ENCODE measurements at regions of chr3 and their contacts with region 1.

Region 1: DNA sequence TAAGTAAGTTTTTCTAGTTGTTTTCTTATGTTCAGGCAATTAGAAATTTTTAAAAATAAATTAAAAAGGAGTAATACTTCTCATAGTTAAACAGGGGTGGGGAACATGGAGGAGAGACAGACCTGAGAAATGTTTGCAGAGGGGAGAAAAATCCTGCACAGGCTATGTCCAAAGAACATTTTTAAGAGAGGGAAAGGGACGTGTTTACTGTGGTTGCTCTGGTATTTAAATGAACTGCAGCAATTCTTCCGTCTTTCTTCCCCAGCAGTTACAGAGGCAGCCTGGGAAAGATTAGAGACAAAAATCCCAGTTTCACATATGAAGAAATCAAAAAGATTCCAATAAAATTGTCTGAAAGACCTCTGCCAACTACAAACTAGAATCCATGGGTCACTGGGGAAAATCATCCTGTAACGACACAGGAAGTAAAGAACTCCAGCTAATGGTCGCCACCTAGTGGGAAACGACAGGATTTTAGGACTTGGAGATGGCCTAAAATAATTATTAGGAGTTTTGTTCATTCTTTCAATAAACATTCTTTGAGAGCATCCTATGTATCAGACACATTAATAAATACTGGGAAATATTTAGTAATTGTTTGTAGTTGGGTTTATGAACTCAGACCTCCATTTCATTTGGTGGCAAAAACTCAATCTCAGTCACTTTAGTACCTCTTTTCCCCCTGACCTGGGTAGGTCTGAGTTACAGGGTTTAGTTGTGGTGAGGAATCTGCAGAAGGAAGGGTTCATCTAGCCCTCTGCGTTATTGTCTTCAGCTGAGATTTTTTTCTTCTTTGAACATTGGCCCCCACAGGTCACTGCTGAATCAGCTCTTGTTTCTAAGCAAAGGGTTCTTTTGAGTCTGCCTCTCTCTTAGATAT is 69.9 kb upstream of the GOLIM4 start:
- DNase-seq: no peak

Region 2: GRCh38 chr3:167684388-167684993 is 481.1 kb before region 1 on chr3:
- intact Hi-C with region 1: no loop called
- DNase-seq: no peak

Region 3: DNA sequence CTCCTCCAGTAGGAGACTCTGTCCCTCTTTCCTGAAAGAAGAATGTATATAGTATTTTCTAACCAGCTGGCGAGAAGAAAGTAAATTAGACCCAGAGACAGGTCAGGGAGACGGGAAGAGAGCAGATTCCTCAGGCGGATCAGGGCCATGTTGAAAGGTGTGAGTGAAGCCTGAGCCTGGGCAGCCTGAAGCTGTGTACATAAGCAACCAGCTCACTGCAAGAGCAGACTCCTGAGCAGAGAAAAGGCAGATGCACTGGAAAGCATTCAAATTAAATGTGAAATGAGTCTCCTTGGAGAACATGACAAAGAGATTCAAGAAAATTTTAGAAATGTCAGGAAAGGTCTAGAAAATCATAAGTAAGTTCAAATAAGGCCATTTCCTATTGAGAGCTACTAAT is 235.7 kb before region 1 on chr3:
- intact Hi-C with region 1: loop called (anchors 10 kb)
- DNase-seq: no peak

Region 4: GRCh38 chr3:168036619-168037018 is 129.0 kb before region 1 on chr3:
- intact Hi-C with region 1: no loop called
- DNase-seq: no peak

Region 5: GRCh38 chr3:168047190-168047795 is 118.3 kb before region 1 on chr3:
- intact Hi-C with region 1: loop called (anchors 1 kb)
- DNase-seq: no peak

Region 6: GRCh38 chr3:168095611-168096209 is 69.9 kb before region 1 on chr3 and contains the start of gene GOLIM4:
- intact Hi-C with region 1: loop called (anchors 10 kb)
- DNase-seq: peak; percentile 98
- total RNA-seq, gene GOLIM4: 88.8 TPM

Region 7: GRCh38 chr3:168116279-168116678 is 49.4 kb before region 1 on chr3:
- intact Hi-C with region 1: loop called (anchors 5 kb)
- DNase-seq: no peak

Region 8: GRCh38 chr3:168267179-168267578 is 101.5 kb after region 1 on chr3:
- intact Hi-C with region 1: no loop called
- DNase-seq: no peak